Activated T-helper 1 cell treated with anti-CD3 and anti-CD28 coated beads, Interleukin-12 subunit alpha, Interleukin-12 subunit beta, Interleukin-2, Interleukin-4 antibody, amounts not matched to agents 30 ng/mL and 10 ng/mL and 1 ng/mL, durations not matched to agents 14 hours and 24 hours and 36 hours (primary cell): ENCODE measurements at regions of chr3 and their contacts with region 1.

Region 1: GRCh38 chr3:18559331-18559842 is 134.2 kb upstream of the SATB1 start:
- DNase-seq: peak; percentile 27
- H3K4me3 Mint-ChIP-seq: peak overlapping the region; percentile 64
- H3K27ac Mint-ChIP-seq: peak overlapping the region; percentile 90
- H3K4me1 Mint-ChIP-seq: peaks cover 66% of the 10 kb centered on the region
- H3K27me3 Mint-ChIP-seq: no peaks in the 10 kb centered on the region

Region 2: DNA sequence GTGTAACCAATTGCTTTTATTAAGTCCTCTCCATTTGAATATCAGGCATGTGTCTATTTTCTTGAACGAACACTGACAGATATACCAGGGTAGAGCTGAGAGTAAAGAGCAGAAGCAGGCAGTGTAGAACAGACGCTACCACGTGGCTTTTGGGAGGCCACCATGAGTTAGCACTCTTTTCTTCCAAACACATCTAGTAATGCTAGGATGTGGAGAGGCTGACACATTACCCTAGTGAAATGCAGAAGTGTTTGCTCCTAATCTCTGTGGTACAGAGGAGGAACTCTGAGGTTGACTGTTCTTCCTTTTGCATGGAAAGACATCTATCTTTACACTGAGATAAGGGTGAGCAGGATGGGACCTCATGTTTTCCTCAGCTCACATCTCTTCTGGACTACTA is 350.5 kb before region 1 on chr3:
- intact Hi-C with region 1: loop called (anchors 1 kb)
- DNase-seq: no peak
- H3K4me3 Mint-ChIP-seq: no peak overlapping the region
- H3K27ac Mint-ChIP-seq: no peak overlapping the region
- H3K4me1 Mint-ChIP-seq: peaks cover 6% of the 10 kb centered on the region
- H3K27me3 Mint-ChIP-seq: peaks cover 2% of the 10 kb centered on the region

Region 3: GRCh38 chr3:18649666-18650363 is 90.4 kb after region 1 on chr3:
- intact Hi-C with region 1: loop called (anchors 1 kb)
- DNase-seq: peak; percentile 70
- H3K4me3 Mint-ChIP-seq: peak overlapping the region; percentile 59
- H3K27ac Mint-ChIP-seq: peak overlapping the region; percentile 94
- H3K4me1 Mint-ChIP-seq: peaks cover 94% of the 10 kb centered on the region
- H3K27me3 Mint-ChIP-seq: no peaks in the 10 kb centered on the region

Region 4: GRCh38 chr3:18717598-18717997 is 158.2 kb after region 1 on chr3:
- intact Hi-C with region 1: loop called (anchors 1 kb)
- DNase-seq: no peak
- H3K4me3 Mint-ChIP-seq: peak overlapping the region; percentile 64
- H3K27ac Mint-ChIP-seq: peak overlapping the region; percentile 98
- H3K4me1 Mint-ChIP-seq: peaks cover 67% of the 10 kb centered on the region
- H3K27me3 Mint-ChIP-seq: no peaks in the 10 kb centered on the region

Region 5: GRCh38 chr3:18787441-18787840 is 228.1 kb after region 1 on chr3:
- intact Hi-C with region 1: loop called (anchors 1 kb)
- DNase-seq: no peak
- H3K4me3 Mint-ChIP-seq: no peak overlapping the region
- H3K27ac Mint-ChIP-seq: no peak overlapping the region
- H3K4me1 Mint-ChIP-seq: peaks cover 8% of the 10 kb centered on the region
- H3K27me3 Mint-ChIP-seq: peaks cover 3% of the 10 kb centered on the region